Activated CD4-positive, alpha-beta T cell treated with anti-CD3 and anti-CD28 coated beads for 36 hours (primary cell): ENCODE measurements at regions of chr12 and their contacts with region 1.

Region 1: GRCh38 chr12:122399592-122400373 is 22.7 kb downstream of the CLIP1 start:
- DNase-seq: peak; percentile 73
- ATAC-seq: peak; percentile 37
- H3K4me3 Mint-ChIP-seq: peak overlapping the region; percentile 43
- H3K27ac Mint-ChIP-seq: peak overlapping the region; percentile 86
- H3K4me1 Mint-ChIP-seq: peaks cover 50% of the 10 kb centered on the region
- H3K27me3 Mint-ChIP-seq: no peaks in the 10 kb centered on the region

Region 2: GRCh38 chr12:122389697-122390096 is 10.1 kb before region 1 on chr12:
- CTCF ChIA-PET with region 1: interaction called, 19 read pairs
- POLR2A ChIA-PET with region 1: no interaction called
- intact Hi-C with region 1: no loop called
- DNase-seq: no peak
- ATAC-seq: no peak
- H3K4me3 Mint-ChIP-seq: no peak overlapping the region
- H3K27ac Mint-ChIP-seq: no peak overlapping the region
- H3K4me1 Mint-ChIP-seq: peaks cover 14% of the 10 kb centered on the region
- H3K27me3 Mint-ChIP-seq: no peaks in the 10 kb centered on the region

Region 3: DNA sequence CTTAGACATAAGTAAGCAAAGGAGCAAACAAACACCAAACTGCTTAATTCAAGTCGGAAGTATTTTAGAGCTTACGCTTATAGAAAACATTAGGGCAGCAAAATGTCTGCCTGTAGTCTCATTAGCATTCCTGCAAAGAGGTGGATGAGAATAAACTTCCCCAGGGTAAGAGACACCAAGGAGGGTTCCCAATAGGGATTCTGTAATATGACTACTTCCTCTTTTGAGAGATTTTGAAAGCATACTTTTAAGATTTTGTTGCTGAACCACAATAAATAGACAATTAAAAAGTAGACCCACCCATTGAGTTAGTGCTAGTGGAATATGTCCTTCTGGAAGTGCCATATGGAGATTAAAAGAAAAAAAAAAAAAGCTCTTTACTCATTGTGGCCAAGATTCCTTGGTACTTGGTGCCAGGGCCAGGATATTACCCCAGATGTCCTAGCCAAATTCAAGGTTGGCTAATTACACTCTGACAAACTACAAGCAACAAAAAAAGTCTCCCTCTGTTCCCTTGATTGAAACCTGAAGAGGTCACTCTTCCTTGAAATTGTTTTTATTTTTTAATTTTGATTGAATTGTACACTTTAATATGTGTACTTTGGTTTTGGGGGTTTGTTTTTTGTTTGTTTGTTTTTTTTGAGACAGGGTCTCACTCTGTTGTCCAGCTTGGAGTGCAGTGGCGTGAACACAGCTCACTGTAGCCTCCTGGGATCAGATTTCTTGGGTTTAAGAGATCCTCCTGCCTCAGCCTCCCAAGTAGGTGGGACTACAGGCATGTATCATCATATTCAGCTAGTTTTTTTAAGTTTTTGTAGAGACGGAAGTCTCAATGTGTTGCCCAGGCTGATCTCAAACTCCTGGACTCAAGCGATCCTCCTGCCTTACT is 14.0 kb after region 1 on chr12:
- CTCF ChIA-PET with region 1: interaction called, 27 read pairs
- POLR2A ChIA-PET with region 1: interaction called, 12 read pairs
- intact Hi-C with region 1: loop called (anchors 1 kb)
- DNase-seq: no peak
- ATAC-seq: no peak
- H3K4me3 Mint-ChIP-seq: peak overlapping the region; percentile 69
- H3K27ac Mint-ChIP-seq: peak overlapping the region; percentile 99
- H3K4me1 Mint-ChIP-seq: peaks cover 54% of the 10 kb centered on the region
- H3K27me3 Mint-ChIP-seq: no peaks in the 10 kb centered on the region

Region 4: DNA sequence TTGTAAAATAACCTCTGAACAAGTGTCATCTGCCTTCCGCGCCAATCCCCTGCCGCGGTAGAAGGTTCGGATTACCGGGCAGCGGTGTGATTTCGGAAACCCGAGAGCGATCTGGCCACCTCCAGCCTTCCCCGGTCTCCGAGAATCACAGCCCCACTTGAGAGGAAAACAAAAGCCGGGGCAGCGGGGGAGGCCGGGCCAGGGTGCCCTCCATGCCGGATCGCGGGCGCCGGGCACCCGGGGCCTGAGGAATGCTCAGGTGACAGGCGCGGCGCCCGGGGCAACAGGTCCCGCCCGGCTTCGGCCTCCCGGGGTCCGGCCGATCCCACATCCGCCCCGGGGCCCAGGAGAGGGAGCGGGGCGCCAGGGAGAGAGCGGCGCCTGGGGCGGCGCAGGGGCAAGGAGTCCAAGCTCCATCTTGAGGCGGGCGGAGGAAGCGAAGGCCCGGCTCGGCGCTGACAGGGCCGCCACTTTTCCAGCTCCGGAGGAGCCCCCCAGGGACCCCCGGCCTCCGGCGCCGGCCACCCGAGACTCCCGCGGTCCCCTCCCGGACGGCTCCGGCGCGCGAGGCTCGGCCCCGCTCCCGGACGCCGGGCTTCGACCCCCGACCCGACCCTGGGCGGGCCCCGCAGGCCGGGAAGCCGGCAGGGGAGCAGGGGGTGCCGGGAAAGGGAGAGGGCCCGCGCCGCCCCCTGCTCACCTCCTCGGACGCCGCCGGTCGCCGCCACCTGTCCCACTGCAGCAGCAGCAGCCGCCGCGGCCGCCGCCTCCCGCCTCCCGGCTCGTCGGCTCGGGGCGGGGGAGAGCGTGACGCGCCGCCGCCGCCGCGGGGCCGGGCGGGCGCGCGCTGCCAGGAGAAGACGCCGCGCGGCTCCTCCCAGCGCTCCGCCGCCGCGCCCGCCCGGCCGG is 22.3 kb after region 1 on chr12 and contains the start of gene CLIP1:
- CTCF ChIA-PET with region 1: interaction called, 21 read pairs
- POLR2A ChIA-PET with region 1: interaction called, 4 read pairs
- intact Hi-C with region 1: loop called (anchors 1 kb)
- DNase-seq: peak; percentile 77
- ATAC-seq: peak; percentile 74
- H3K4me3 Mint-ChIP-seq: peak within 1 kb of the TSS; percentile 91
- H3K27ac Mint-ChIP-seq: peak within 1 kb of the TSS; percentile 89
- H3K4me1 Mint-ChIP-seq: peaks cover 37% of the 10 kb centered on the region
- H3K27me3 Mint-ChIP-seq: no peaks in the 10 kb centered on the region
- total RNA-seq, gene CLIP1: 53.9 to 58.6 TPM

Region 5: DNA sequence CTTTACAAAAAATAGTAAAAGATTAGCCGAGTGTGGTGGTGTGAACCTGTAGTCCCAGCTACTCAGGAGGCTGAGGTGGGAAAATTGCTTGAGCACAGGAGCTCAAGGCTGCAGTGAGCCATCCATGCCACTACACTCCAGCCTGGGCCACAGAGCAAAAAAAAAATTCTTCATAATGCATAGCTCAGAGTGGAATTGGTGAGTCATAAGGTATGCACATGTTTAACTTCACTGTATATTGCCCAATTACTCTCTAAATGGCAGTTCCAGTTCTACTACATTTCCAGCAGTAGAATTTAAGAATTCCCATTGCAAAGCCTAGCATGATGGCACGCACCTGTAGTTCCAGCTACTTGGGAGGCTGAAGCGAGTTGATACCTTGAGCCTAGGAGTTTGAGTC is 49.6 kb after region 1 on chr12:
- CTCF ChIA-PET with region 1: interaction called, 11 read pairs
- POLR2A ChIA-PET with region 1: interaction called, 4 read pairs
- intact Hi-C with region 1: loop called in 1 of 2 experiments (anchors 1 kb)
- DNase-seq: peak; percentile 35
- ATAC-seq: peak; percentile 55
- H3K4me3 Mint-ChIP-seq: no peak overlapping the region
- H3K27ac Mint-ChIP-seq: no peak overlapping the region
- H3K4me1 Mint-ChIP-seq: peaks cover 28% of the 10 kb centered on the region
- H3K27me3 Mint-ChIP-seq: no peaks in the 10 kb centered on the region

Region 6: GRCh38 chr12:122471324-122472226 is 71.8 kb after region 1 on chr12:
- CTCF ChIA-PET with region 1: interaction called, 228 read pairs
- POLR2A ChIA-PET with region 1: interaction called, 10 read pairs
- intact Hi-C with region 1: loop called (anchors 1 kb)
- DNase-seq: no peak
- ATAC-seq: peak; percentile 40
- H3K4me3 Mint-ChIP-seq: no peak overlapping the region
- H3K27ac Mint-ChIP-seq: no peak overlapping the region
- H3K4me1 Mint-ChIP-seq: peaks cover 28% of the 10 kb centered on the region
- H3K27me3 Mint-ChIP-seq: no peaks in the 10 kb centered on the region

Region 7: DNA sequence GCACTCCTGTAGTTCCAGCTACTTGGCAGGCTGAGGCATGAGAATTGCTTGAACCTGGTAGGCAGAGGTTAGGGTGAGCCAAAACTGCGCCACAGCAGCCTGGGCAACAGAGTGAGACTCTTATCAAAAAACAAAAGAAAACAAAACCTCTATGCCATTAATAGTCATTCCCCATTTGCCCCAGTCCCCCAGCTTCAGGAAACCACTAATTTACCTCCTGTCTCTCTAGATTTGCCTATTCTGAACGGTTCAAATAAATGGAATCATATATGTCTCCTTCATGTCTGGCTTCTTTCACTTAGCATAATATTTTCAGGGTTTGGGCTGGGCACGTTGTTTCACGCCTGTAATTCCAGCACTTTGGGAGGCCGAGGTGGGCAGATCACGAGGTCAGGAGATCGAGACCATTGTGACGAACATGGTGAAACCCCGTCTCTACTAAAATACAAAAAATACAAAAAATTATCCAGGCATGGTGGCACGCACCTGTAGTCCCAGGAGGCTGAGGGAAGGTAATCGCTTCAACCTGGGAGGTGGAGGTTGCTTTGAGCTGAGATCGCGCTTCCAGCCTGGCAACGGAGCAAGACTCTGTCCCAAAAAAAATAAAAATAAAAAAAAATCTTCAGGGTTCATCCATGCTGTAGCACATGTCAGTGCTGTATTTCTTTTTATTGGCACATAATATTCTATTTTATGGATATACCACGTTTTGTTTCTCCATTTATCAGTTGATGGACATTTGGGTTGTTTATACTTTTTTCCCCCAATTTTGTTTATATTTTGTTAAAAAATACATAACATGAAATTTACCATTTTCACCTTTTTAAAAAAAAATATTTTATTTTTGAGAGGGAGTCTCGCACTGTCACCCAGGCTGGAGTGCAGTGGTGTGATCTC is 159.2 kb after region 1 on chr12:
- CTCF ChIA-PET with region 1: no interaction called
- POLR2A ChIA-PET with region 1: no interaction called
- intact Hi-C with region 1: no loop called
- DNase-seq: no peak
- ATAC-seq: no peak
- H3K4me3 Mint-ChIP-seq: no peak overlapping the region
- H3K27ac Mint-ChIP-seq: no peak overlapping the region
- H3K4me1 Mint-ChIP-seq: peaks cover 4% of the 10 kb centered on the region
- H3K27me3 Mint-ChIP-seq: no peaks in the 10 kb centered on the region

Region 8: GRCh38 chr12:122767691-122768090 is 367.9 kb after region 1 on chr12:
- CTCF ChIA-PET with region 1: no interaction called
- POLR2A ChIA-PET with region 1: no interaction called
- intact Hi-C with region 1: no loop called
- DNase-seq: no peak
- ATAC-seq: peak; percentile 9
- H3K4me3 Mint-ChIP-seq: no peak overlapping the region
- H3K27ac Mint-ChIP-seq: no peak overlapping the region
- H3K4me1 Mint-ChIP-seq: no peaks in the 10 kb centered on the region
- H3K27me3 Mint-ChIP-seq: no peaks in the 10 kb centered on the region

Region 9: DNA sequence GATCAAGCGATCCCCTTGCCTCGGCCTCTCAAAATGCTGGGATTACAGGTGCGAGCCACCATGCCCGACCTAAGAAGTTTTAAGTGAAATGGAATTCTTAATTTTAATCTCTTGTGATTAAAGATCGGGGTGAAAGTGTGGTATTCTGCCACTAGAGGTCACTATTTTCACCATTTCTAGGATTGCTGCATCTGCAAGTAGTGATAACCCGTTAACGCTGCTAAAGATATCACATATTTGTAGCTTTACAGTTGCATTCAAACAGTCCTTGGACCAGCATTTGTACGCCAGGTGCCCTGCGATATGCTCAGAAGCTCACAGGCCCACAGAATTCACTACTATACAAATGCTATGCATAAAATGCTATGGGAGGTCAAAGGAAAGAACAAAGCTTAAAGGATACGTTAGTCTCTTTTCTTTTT is 393.9 kb after region 1 on chr12:
- CTCF ChIA-PET with region 1: no interaction called
- POLR2A ChIA-PET with region 1: no interaction called
- intact Hi-C with region 1: no loop called
- DNase-seq: no peak
- ATAC-seq: peak; percentile 76
- H3K4me3 Mint-ChIP-seq: no peak overlapping the region
- H3K27ac Mint-ChIP-seq: no peak overlapping the region
- H3K4me1 Mint-ChIP-seq: no peaks in the 10 kb centered on the region
- H3K27me3 Mint-ChIP-seq: no peaks in the 10 kb centered on the region